Dendritic cell treated with granulocyte-macrophage colony-stimulating factor and Interleukin-4, amounts not matched to agents 40 ng/mL and 50 ng/mL, for 4 days (primary cell): ENCODE measurements at regions of chr20 and their contacts with region 1.

Region 1: GRCh38 chr20:58890518-58891085 is 38.1 kb downstream of the GNAS start:
- H3K4me3 Mint-ChIP-seq: peak overlapping the region; percentile 96
- H3K27ac Mint-ChIP-seq: peak overlapping the region; percentile 88
- H3K4me1 Mint-ChIP-seq: peaks cover 35% of the 10 kb centered on the region
- H3K27me3 Mint-ChIP-seq: peaks cover 7% of the 10 kb centered on the region

Region 2: GRCh38 chr20:58688840-58689239 is 201.8 kb before region 1 on chr20:
- intact Hi-C with region 1: no loop called
- H3K4me3 Mint-ChIP-seq: no peak overlapping the region
- H3K27ac Mint-ChIP-seq: peak overlapping the region; percentile 65
- H3K4me1 Mint-ChIP-seq: peaks cover 35% of the 10 kb centered on the region
- H3K27me3 Mint-ChIP-seq: no peaks in the 10 kb centered on the region

Region 3: GRCh38 chr20:58907399-58908137 is 17.0 kb after region 1 on chr20:
- intact Hi-C with region 1: loop called (anchors 1 kb)
- H3K4me3 Mint-ChIP-seq: peak overlapping the region; percentile 66
- H3K27ac Mint-ChIP-seq: peak overlapping the region; percentile 89
- H3K4me1 Mint-ChIP-seq: peaks cover 37% of the 10 kb centered on the region
- H3K27me3 Mint-ChIP-seq: no peaks in the 10 kb centered on the region

Region 4: GRCh38 chr20:58980700-58981627 is 90.4 kb after region 1 on chr20 and contains the start of gene NELFCD:
- intact Hi-C with region 1: loop called (anchors 5 kb)
- H3K4me3 Mint-ChIP-seq: peak within 1 kb of the TSS; percentile 77
- H3K27ac Mint-ChIP-seq: peak within 1 kb of the TSS; percentile 81
- H3K4me1 Mint-ChIP-seq: peaks cover 48% of the 10 kb centered on the region
- H3K27me3 Mint-ChIP-seq: peaks cover 5% of the 10 kb centered on the region

Region 5: DNA sequence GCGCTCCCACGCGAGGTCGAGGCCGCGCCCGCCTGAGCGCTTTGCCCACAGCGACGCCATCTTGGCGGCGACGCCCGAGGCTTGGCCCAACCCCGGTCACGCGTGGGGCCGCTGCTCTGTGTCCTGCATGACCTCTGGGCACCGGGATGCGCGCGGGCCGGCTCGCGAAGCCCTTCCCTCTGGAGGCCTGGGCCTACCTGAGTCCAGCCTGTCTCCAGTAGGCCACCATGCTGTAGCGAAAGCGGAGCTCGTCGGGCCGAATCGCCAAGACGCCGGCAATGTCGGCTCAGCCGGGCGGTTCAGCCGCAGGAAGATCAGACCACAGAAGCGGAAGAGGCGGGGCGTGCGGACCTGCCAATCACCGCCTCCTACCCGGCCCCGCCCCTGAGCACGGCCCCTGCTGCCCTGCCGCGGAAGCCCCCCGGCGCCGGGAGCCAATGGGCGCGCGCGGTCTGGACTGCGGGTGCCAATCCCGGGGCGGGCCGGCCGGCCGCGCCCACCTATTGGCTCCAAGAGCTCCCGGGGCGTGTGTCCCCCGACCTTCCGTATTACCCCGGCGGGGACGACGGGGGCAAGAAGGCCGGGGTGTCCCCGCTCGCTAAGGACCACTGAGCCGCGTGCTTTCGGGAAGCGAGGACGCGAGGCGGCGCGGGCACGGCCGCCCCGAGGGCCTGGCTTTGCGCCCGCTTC is 141.6 kb after region 1 on chr20 and contains the start of gene ATP5F1E:
- intact Hi-C with region 1: loop called (anchors 5 kb)
- H3K4me3 Mint-ChIP-seq: peak within 1 kb of the TSS; percentile 93
- H3K27ac Mint-ChIP-seq: peak within 1 kb of the TSS; percentile 98
- H3K4me1 Mint-ChIP-seq: peaks cover 37% of the 10 kb centered on the region
- H3K27me3 Mint-ChIP-seq: no peaks in the 10 kb centered on the region